Endothelial cell of umbilical vein (primary cell): ENCODE measurements at regions of chrX and their contacts with region 1.

Region 1: GRCh38 chrX:155070975-155071693 is at the starts of genes BRCC3, CMC4 and MTCP1:
- DNase-seq: peak; percentile 75
- H3K4me3 ChIP-seq: peak within 1 kb of the TSS; percentile 63 to 92 (median 73)
- H3K27ac ChIP-seq: peak within 1 kb of the TSS; percentile 66
- H3K4me1 ChIP-seq: peaks cover 20% of the 10 kb centered on the region
- H3K27me3 ChIP-seq: no peaks in the 10 kb centered on the region
- CTCF ChIP-seq: no peak
- POLR2A ChIP-seq: peak; percentile 76
- total RNA-seq, gene BRCC3: 23.9 and 25.5 TPM in 2 replicates
- total RNA-seq, gene CMC4: 3.2 and 4.3 TPM in 2 replicates
- total RNA-seq, gene MTCP1: 15.8 and 15.9 TPM in 2 replicates

Region 2: GRCh38 chrX:155026726-155027508 is 44.2 kb before region 1 on chrX and contains the start of gene FUNDC2:
- CTCF ChIA-PET with region 1: interaction called, 4 read pairs
- POLR2A ChIA-PET with region 1: no interaction called
- dilution Hi-C with region 1: no loop called
- intact Hi-C with region 1: loop called (anchors 1 kb)
- DNase-seq: peak; percentile 94
- H3K4me3 ChIP-seq: peak within 1 kb of the TSS; percentile 61 to 96 (median 82)
- H3K27ac ChIP-seq: peak within 1 kb of the TSS; percentile 96
- H3K4me1 ChIP-seq: no peaks in the 10 kb centered on the region
- H3K27me3 ChIP-seq: peaks cover 2% of the 10 kb centered on the region in 2 experiments
- CTCF ChIP-seq: no peak
- POLR2A ChIP-seq: no peak
- total RNA-seq, gene FUNDC2: 53.3 TPM in 2 replicates

Region 3: GRCh38 chrX:155056877-155057792 is 14.0 kb before region 1 on chrX:
- CTCF ChIA-PET with region 1: interaction called, 3 read pairs
- POLR2A ChIA-PET with region 1: no interaction called
- dilution Hi-C with region 1: no loop called
- intact Hi-C with region 1: loop called (anchors 1 kb)
- DNase-seq: peak; percentile 82
- H3K4me3 ChIP-seq: no peak overlapping the region
- H3K27ac ChIP-seq: no peak overlapping the region
- H3K4me1 ChIP-seq: peaks cover 11% of the 10 kb centered on the region
- H3K27me3 ChIP-seq: no peaks in the 10 kb centered on the region
- CTCF ChIP-seq: peak; percentile 61 to 78
- POLR2A ChIP-seq: no peak

Region 4: GRCh38 chrX:155086202-155086840 is 15.2 kb after region 1 on chrX:
- CTCF ChIA-PET with region 1: interaction called, 3 read pairs
- POLR2A ChIA-PET with region 1: no interaction called
- dilution Hi-C with region 1: no loop called
- intact Hi-C with region 1: loop called (anchors 1 kb)
- DNase-seq: no peak
- H3K4me3 ChIP-seq: no peak overlapping the region
- H3K27ac ChIP-seq: no peak overlapping the region
- H3K4me1 ChIP-seq: peaks cover 4% of the 10 kb centered on the region
- H3K27me3 ChIP-seq: no peaks in the 10 kb centered on the region
- CTCF ChIP-seq: peak in 1 of 2 donors; percentile 33
- POLR2A ChIP-seq: no peak